T-cell (primary cell): ENCODE measurements at regions of chr4 and their contacts with region 1.

Region 1: DNA sequence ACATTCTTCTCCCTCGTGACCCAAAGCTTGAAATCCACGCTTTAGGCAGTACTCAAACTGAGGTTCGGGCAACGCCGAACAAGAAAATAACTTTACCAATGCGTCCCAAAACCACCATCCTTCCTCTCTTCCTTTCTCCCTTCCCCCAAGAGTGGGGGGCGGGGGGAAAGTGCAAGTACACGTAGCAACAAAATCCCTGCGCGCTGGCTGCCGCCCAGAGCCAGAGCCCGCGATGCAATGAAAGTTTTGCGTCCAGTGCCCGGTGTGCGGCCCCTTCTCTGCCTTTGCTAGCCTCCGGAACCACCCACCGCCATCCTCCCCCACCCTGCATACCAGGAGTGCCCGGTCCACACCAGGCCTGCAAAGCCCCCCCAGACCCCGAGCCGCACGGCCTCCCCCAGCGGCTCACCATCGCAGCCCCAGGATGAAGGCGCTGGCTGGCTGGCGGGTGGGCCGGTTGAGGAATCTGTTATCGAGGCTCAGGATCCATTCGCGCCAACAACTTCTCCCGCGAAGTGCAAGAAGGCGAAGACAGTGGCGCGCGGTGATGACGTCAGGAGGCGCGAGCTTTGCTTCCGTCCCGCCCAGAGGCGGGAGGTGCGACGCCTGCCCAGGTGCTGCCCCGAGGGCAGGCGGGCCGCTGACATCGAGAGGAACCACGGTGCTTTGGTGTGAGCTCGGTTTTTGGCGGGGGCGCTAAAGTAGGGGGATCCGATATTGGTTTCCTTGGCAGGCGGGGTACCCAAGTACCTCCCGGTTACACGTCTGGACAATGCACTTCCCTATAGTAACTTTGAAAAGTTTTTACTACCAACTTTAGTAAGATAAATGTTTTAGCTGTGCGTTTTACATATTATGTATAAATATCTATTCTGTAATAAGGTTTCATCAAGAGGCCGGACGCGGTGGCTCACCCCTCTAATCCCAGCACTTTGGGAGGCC is at the start of gene RFC1:
- DNase-seq: peak; percentile 82 to 98 (median 92)
- ATAC-seq: peak; percentile 94 to 99 (median 98)
- H3K4me3 ChIP-seq: peak within 1 kb of the TSS; percentile 85 to 97
- H3K4me3 Mint-ChIP-seq: peak within 1 kb of the TSS; percentile 90 to 95 (median 91)
- H3K27ac ChIP-seq: peak within 1 kb of the TSS; percentile 69
- H3K27ac Mint-ChIP-seq: peak within 1 kb of the TSS; percentile 86
- H3K4me1 ChIP-seq: peaks cover 22 to 23% of the 10 kb centered on the region in 2 experiments
- H3K4me1 Mint-ChIP-seq: peaks cover 43 to 50% (median 47%) of the 10 kb centered on the region in 3 donors
- H3K27me3 ChIP-seq: no peaks in the 10 kb centered on the region
- H3K27me3 Mint-ChIP-seq: no peaks in the 10 kb centered on the region
- total RNA-seq, gene RFC1: 45.7 to 77.4 (median 54.5) TPM

Region 2: GRCh38 chr4:39181905-39182638 is 184.0 kb before region 1 on chr4 and contains the start of gene WDR19:
- CTCF ChIA-PET with region 1: no interaction called
- POLR2A ChIA-PET with region 1: interaction called in 1 of 2 experiments, 11 read pairs
- DNase-seq: peak; percentile 95 to 99 (median 98)
- ATAC-seq: peak; percentile 95 to 97 (median 96)
- H3K4me3 ChIP-seq: peak within 1 kb of the TSS; percentile 63 to 71
- H3K4me3 Mint-ChIP-seq: no peak within 1 kb of the TSS
- H3K27ac ChIP-seq: peak within 1 kb of the TSS; percentile 52
- H3K27ac Mint-ChIP-seq: peak within 1 kb of the TSS in 1 of 2 donors; percentile 43
- H3K4me1 ChIP-seq: peaks cover 5 to 9% of the 10 kb centered on the region in 2 experiments
- H3K4me1 Mint-ChIP-seq: peaks cover 0 to 12% (median 6%) of the 10 kb centered on the region in 3 donors
- H3K27me3 ChIP-seq: peaks cover 0 to 6% of the 10 kb centered on the region in 2 experiments
- H3K27me3 Mint-ChIP-seq: peaks cover 0 to 12% of the 10 kb centered on the region in 2 donors
- total RNA-seq, gene WDR19: 17.4 to 39.9 (median 28.0) TPM

Region 3: GRCh38 chr4:39342731-39343130 is 23.4 kb before region 1 on chr4:
- CTCF ChIA-PET with region 1: no interaction called
- POLR2A ChIA-PET with region 1: no interaction called
- DNase-seq: no peak
- ATAC-seq: no peak
- H3K4me3 ChIP-seq: no peak overlapping the region
- H3K4me3 Mint-ChIP-seq: no peak overlapping the region
- H3K27ac ChIP-seq: no peak overlapping the region
- H3K27ac Mint-ChIP-seq: no peak overlapping the region
- H3K4me1 ChIP-seq: no peaks in the 10 kb centered on the region
- H3K4me1 Mint-ChIP-seq: peaks cover 37 to 56% (median 48%) of the 10 kb centered on the region in 3 donors
- H3K27me3 ChIP-seq: no peaks in the 10 kb centered on the region
- H3K27me3 Mint-ChIP-seq: no peaks in the 10 kb centered on the region

Region 4: GRCh38 chr4:39480902-39481695 is 115.0 kb after region 1 on chr4:
- CTCF ChIA-PET with region 1: interaction called in 1 of 2 experiments, 14 read pairs
- POLR2A ChIA-PET with region 1: no interaction called
- DNase-seq: no peak
- ATAC-seq: no peak
- H3K4me3 ChIP-seq: no peak overlapping the region
- H3K4me3 Mint-ChIP-seq: no peak overlapping the region
- H3K27ac ChIP-seq: no peak overlapping the region
- H3K27ac Mint-ChIP-seq: no peak overlapping the region
- H3K4me1 ChIP-seq: no peaks in the 10 kb centered on the region
- H3K4me1 Mint-ChIP-seq: no peaks in the 10 kb centered on the region
- H3K27me3 ChIP-seq: no peaks in the 10 kb centered on the region
- H3K27me3 Mint-ChIP-seq: no peaks in the 10 kb centered on the region